Heart left ventricle (tissue), 16 donors: ENCODE measurements at regions of chr11 and their contacts with region 1.

Region 1: GRCh38 chr11:110429731-110430266 is at the start of gene FDX1:
- DNase-seq: peak; percentile 79 to 91 (median 90)
- ATAC-seq: peak; percentile 86 to 97 (median 95)
- H3K4me3 ChIP-seq: peak within 1 kb of the TSS; percentile 73 to 94 (median 84)
- H3K27ac ChIP-seq: peak within 1 kb of the TSS; percentile 74 to 97 (median 91)
- H3K4me1 ChIP-seq: peaks cover 0 to 39% (median 31%) of the 10 kb centered on the region in 12 donors
- H3K27me3 ChIP-seq: no peaks in the 10 kb centered on the region
- CTCF ChIP-seq: peak; percentile 32 to 89 (median 70)
- POLR2A ChIP-seq: peak in 1 of 2 donors; percentile 76
- total RNA-seq, gene FDX1: 15.2 to 28.5 (median 22.5) TPM

Region 2: DNA sequence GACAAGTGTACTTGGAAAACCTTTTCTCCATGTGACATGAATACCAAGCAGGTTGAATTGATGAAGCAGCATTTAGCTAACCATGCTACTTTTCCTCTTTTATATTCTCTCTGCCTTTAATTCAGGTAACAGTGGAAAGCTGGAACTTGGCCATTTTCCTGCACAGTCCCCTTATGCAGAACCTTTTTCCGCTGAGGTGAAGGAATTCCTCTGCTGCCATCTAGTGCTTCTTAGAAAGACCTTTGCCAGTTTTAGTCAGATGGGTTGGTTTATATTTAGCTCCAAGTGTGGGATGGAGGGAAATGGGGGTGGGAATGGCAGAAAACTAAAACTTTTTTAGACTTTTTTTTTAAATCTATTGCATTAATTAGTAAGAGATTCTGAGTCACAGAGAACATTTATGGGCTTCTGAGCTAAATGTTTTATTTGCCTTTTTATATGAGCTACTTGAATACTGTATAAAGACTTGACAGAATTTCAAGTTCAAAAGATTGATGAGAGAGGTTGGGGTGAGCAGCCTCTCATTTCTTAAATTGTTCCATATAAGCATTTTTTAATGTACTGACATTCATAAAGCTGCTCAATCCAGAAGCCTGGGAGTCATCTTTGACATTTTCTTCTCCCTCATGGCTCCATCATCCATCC is 490.5 kb before region 1 on chr11:
- intact Hi-C with region 1: loop called in 4 of 10 experiments (anchors 5 to 10 kb)
- DNase-seq: peak in 2 of 5 donors; percentile 19 to 22
- ATAC-seq: peak in 3 of 4 donors; percentile 69 to 78 (median 74)
- H3K4me3 ChIP-seq: no peak overlapping the region
- H3K27ac ChIP-seq: no peak overlapping the region
- H3K4me1 ChIP-seq: peaks cover 0 to 6% (median 0%) of the 10 kb centered on the region in 12 donors
- H3K27me3 ChIP-seq: no peaks in the 10 kb centered on the region
- CTCF ChIP-seq: peak; percentile 18 to 63 (median 50)
- POLR2A ChIP-seq: no peak

Region 3: DNA sequence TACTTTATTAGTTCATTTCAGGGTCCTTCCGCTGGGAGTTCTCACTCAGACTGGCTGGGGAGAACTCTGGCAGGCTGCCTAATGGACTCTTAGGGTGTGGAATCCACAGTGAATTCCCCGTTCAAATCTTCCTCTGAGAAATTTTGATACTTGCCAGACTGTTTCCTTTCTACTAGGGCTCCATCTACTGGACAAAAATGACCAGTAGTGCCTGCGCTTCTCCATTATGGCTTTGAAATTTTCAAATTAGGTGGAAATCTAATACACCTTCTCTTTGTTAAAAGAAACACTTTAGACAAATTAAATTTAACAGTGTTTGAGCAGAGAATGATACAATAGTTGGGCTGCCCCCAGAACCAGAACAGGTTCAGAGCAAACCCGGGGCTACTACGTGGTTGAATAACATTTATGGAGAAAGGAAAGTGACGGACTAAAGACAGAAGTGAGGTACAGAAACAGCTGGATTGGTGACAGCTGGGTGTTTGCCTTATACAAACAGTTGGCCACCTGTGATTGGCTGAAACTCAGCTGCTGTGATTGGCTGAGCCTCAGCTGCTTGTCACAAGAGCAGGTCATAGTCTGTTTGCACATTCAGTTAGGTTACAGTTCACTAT is 53.0 kb before region 1 on chr11:
- intact Hi-C with region 1: loop called (anchors 2 to 5 kb)
- DNase-seq: peak in 4 of 5 donors; percentile 78 to 86 (median 81)
- ATAC-seq: peak; percentile 56 to 89 (median 84)
- H3K4me3 ChIP-seq: peak overlapping the region in 3 of 12 donors; percentile 18 to 34 (median 19)
- H3K27ac ChIP-seq: peak overlapping the region in 6 of 12 donors; percentile 19 to 61 (median 27)
- H3K4me1 ChIP-seq: peaks cover 0 to 44% (median 7%) of the 10 kb centered on the region in 12 donors
- H3K27me3 ChIP-seq: no peaks in the 10 kb centered on the region
- CTCF ChIP-seq: peak; percentile 66 to 90 (median 83)
- POLR2A ChIP-seq: no peak

Region 4: GRCh38 chr11:110479108-110480101 is 49.6 kb after region 1 on chr11:
- intact Hi-C with region 1: no loop called
- DNase-seq: peak in 1 of 5 donors; percentile 26
- ATAC-seq: peak in 3 of 4 donors; percentile 44 to 62 (median 57)
- H3K4me3 ChIP-seq: no peak overlapping the region
- H3K27ac ChIP-seq: peak overlapping the region in 1 of 12 donors; percentile 74
- H3K4me1 ChIP-seq: peaks cover 0 to 34% (median 0%) of the 10 kb centered on the region in 12 donors
- H3K27me3 ChIP-seq: no peaks in the 10 kb centered on the region
- CTCF ChIP-seq: no peak
- POLR2A ChIP-seq: no peak